ENCODE measurements at regions of chr2 and their contacts with region 1.

Region 1: DNA sequence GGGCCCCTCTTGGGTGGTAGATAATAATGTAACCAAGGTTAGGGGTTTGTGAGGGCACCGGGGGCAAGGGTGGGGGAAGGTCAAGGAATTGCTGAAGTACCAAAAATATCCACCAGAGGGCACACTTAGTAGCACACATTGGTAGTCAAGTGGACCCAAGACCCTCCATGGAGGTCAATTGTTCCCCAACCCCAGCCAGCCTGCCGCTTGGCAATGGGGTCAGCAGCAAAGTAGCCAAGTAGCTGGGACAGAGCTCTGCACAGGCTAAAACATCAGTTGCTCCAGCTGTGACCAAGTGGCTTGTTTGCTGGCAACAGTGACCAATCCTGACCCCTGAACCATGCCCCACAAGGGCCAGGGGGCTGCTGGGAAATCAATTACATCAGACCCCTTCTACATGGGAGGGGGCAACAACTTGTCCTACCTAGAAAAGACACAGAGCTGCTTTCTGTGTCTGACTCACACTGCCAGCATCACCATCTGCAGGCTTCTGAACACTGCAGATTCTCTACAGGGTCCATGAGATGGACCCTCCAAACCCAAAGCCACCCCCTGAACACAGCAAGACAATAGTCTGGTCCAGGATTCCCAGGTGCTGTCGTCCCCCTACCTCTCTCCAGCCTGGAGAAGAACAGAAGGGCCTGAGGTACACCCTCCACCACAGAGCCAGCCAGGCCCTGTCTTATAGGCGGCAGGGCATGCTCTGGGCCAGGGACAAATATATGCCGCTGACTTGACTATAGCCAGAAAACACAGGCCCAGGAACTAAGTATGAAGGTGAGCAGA is 76.0 kb downstream of the EMX1 start:
- DNase-seq: peak; percentile 42 to 89
- ATAC-seq: peak; percentile 33 to 79; a peak in 4 of 6 replicates
- H3K4me3 ChIP-seq: no peak overlapping the region
- H3K27ac ChIP-seq: no peak overlapping the region
- H3K4me1 ChIP-seq: no peaks in the 10 kb centered on the region
- CTCF ChIP-seq: peak; percentile 90
- EP300 ChIP-seq: no peak
- POLR2A ChIP-seq: no peak
- RAD21 ChIP-seq: peak; percentile 63 to 77

Region 2: GRCh38 chr2:72457801-72458516 is 535.4 kb before region 1 on chr2:
- CTCF ChIA-PET with region 1: no interaction called
- POLR2A ChIA-PET with region 1: no interaction called
- DNase-seq: no peak
- ATAC-seq: no peak
- H3K4me3 ChIP-seq: no peak overlapping the region
- H3K27ac ChIP-seq: no peak overlapping the region
- H3K4me1 ChIP-seq: no peaks in the 10 kb centered on the region
- CTCF ChIP-seq: no peak
- EP300 ChIP-seq: no peak
- POLR2A ChIP-seq: no peak
- RAD21 ChIP-seq: no peak

Region 3: GRCh38 chr2:72980535-72981217 is 12.7 kb before region 1 on chr2:
- CTCF ChIA-PET with region 1: interaction called, 190 read pairs
- POLR2A ChIA-PET with region 1: no interaction called
- DNase-seq: no peak
- ATAC-seq: peak in 1 of 2 experiments; percentile 17; a peak in 1 of 6 replicates
- H3K4me3 ChIP-seq: no peak overlapping the region
- H3K27ac ChIP-seq: no peak overlapping the region
- H3K4me1 ChIP-seq: peaks cover 7% of the 10 kb centered on the region; the same call in 1 of the 3 replicates
- CTCF ChIP-seq: no peak
- EP300 ChIP-seq: no peak
- POLR2A ChIP-seq: no peak
- RAD21 ChIP-seq: no peak

Region 4: DNA sequence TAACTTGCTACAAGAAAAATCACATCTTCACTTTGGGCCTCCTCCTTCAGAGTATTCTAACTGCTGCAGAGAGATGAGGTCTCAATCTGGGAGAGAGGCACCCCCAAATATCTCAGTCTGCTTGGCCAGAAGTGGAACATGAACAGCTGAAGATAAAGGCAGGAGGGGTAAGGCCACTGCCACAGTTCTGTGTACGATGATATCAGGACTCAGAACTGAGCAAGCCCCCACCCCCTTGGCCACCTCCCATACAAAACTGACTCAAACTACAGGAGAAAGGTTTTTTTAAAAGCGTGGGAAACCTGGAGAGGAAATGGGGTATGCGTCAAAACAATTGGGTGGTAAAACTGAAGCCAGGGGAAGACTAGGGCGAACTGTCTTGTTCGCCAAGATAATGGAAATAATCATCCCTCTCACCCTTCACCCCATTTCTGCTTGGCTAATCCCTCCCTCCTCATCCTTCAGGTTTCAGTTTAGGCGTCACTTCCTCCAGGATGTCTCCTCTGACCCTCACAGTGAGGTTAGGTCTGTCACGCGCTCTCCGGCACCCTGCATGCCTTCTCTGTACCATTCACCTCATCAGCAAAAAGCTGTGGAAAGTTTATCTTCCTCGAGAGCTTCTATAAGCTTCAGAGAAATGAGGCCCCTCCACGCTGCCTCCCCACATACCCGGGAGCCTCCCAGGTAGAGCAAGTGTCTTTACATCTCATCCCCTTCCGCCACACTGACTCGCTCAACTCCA is 13.8 kb after region 1 on chr2:
- CTCF ChIA-PET with region 1: interaction called, 22 read pairs
- POLR2A ChIA-PET with region 1: no interaction called
- DNase-seq: no peak
- ATAC-seq: no peak
- H3K4me3 ChIP-seq: no peak overlapping the region
- H3K27ac ChIP-seq: no peak overlapping the region
- H3K4me1 ChIP-seq: no peaks in the 10 kb centered on the region
- CTCF ChIP-seq: no peak
- EP300 ChIP-seq: no peak
- POLR2A ChIP-seq: no peak
- RAD21 ChIP-seq: no peak

Region 5: GRCh38 chr2:73013936-73014335 is 20.6 kb after region 1 on chr2:
- CTCF ChIA-PET with region 1: interaction called, 14 read pairs
- POLR2A ChIA-PET with region 1: no interaction called
- DNase-seq: no peak
- ATAC-seq: no peak
- H3K4me3 ChIP-seq: no peak overlapping the region
- H3K27ac ChIP-seq: no peak overlapping the region
- H3K4me1 ChIP-seq: no peaks in the 10 kb centered on the region
- CTCF ChIP-seq: no peak
- EP300 ChIP-seq: no peak
- POLR2A ChIP-seq: no peak
- RAD21 ChIP-seq: no peak

Region 6: GRCh38 chr2:73063909-73064875 is 70.9 kb after region 1 on chr2:
- CTCF ChIA-PET with region 1: interaction called, 22 read pairs
- POLR2A ChIA-PET with region 1: no interaction called
- DNase-seq: peak; percentile 62 to 77
- ATAC-seq: peak; percentile 93 to 96
- H3K4me3 ChIP-seq: peak overlapping the region; percentile 12; the same call in 1 of the 3 replicates
- H3K27ac ChIP-seq: peak overlapping the region; percentile 92 to 95
- H3K4me1 ChIP-seq: peaks cover 52% of the 10 kb centered on the region
- CTCF ChIP-seq: no peak
- EP300 ChIP-seq: no peak
- POLR2A ChIP-seq: no peak
- RAD21 ChIP-seq: peak in 1 of 2 experiments; percentile 11; a peak in 1 of 5 replicates

Region 7: DNA sequence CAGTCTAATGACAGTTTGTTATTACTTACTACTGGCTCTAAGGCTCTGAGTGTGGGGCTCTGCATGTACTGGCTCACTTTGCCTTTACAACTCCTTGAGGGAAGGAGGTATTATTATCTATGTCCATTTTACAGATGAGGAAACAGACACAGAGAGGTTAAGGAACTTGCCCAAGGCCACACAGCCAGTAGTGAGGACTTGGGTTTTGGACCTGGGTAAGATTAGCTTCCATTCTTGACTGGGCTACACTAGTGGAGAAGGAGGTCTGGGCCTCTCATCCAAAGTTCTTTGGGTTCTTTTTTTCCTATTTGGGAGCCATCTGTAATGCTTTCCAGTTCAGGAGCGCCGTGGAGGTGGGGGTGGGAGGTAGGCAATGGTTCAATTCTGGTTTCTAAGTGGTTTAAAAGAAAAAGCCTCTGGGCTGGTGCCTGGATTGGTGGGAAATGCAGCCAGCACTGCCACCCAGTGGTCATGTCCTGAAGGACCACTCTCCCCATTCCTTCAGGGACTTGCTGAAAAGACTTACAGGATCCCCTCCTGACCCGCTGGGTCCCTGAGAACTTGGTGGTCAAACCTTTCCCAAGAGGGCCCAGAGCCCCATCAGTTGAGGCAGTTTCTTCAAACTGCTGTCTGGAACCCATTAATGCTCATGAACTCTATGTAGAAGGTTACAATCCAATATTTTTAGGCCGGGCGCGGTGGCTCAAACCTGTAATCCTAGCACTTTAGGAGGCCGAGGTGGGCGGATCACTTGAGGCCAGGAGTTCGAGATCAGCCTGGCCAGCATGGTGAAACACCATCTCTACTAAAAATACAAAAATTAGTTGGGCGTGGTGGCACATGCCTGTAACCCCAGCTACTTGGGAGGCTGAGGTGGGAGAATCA is 170.4 kb after region 1 on chr2:
- CTCF ChIA-PET with region 1: interaction called, 96 read pairs
- POLR2A ChIA-PET with region 1: no interaction called
- DNase-seq: peak; percentile 82 to 88
- ATAC-seq: peak; percentile 94 to 99
- H3K4me3 ChIP-seq: no peak overlapping the region
- H3K27ac ChIP-seq: no peak overlapping the region
- H3K4me1 ChIP-seq: no peaks in the 10 kb centered on the region
- CTCF ChIP-seq: peak; percentile 96
- EP300 ChIP-seq: no peak
- POLR2A ChIP-seq: no peak
- RAD21 ChIP-seq: peak; percentile 95 to 96

Measured in A549 (cell line).